GM18951 (cell line): ENCODE measurements at regions of chr14 and their contacts with region 1.

Region 1: DNA sequence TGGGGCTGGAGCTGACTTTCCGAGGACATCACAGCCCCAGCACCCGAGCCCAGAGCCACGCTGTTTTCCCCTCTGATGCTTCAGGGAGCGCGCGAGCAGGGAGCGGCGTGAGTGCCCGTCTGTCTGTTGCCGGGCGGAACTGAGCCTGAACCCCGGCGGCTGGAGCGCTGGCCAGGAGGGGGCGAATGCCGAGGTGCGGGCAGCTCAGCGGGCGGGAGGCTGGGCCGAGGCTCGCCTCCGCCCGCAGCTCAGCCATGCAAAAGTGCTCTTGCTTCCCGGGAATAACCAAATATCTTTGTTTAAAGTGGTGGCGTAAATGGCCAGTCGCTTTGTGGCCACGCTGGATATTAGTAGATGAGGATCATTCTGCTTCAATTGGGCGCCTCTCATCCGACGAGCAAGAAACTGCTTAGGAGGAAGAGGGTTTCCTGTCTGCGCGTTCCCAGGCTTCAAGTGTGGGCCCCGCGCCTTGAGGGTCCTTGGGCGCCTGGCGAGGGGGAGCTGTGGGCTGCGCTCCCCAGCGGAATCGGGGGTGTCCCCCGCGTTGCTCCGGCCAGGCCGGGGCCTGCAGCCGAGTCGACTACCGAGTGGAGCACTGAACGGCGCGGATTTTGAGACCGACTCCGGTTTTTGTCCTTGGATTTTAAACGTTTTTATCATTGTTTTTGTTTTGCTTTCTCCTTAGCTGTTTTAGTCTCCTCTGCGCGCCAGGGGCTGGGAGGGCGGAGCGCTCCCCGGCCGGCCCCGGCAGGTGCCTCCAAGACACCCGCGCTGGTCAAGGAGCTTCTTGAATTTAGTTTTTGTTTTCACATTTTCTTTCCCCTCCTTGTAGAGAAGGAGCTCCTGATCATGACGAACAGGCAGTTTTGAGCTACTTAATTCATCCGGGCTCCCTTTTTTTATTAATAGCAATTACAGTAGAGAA is 831 bp upstream of the NKX2-1 start:
- POLR2A ChIP-seq: no peak

Region 2: DNA sequence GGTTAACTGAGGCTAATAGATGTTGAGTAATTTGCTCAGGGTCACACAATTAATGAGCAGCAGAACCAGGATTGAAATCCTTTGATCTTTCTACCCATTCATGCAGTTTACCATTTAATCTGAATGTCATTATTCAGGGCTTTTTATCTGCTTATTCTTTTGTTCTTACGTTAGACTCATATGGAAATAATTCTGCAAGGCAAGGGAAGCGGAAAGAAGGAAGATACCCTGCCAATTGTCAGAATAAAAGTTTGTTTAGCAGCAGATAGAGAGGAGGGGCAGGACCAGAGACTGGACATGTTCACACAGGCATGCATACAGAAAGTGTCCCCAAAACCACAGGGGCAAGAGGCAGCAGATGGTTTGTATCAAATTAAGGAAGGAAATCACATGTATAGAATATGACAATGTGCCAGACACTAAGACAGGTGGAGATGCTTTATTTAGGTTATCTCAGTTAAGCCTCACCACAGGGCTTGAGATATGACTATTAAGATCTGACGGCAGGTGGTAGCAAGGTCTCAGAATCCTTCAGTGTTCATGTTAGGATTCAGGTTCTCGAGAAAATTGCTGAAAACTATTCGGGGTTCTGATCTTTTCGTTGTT is 664.9 kb before region 1 on chr14:
- in situ Hi-C with region 1: no loop called
- POLR2A ChIP-seq: no peak

Region 3: GRCh38 chr14:36661756-36662498 is 141.1 kb after region 1 on chr14 and contains the start of gene PAX9:
- in situ Hi-C with region 1: loop called (anchors 25 kb)
- POLR2A ChIP-seq: no peak